BJ (cell line): ENCODE measurements at regions of chr7 and their contacts with region 1.

Region 1: DNA sequence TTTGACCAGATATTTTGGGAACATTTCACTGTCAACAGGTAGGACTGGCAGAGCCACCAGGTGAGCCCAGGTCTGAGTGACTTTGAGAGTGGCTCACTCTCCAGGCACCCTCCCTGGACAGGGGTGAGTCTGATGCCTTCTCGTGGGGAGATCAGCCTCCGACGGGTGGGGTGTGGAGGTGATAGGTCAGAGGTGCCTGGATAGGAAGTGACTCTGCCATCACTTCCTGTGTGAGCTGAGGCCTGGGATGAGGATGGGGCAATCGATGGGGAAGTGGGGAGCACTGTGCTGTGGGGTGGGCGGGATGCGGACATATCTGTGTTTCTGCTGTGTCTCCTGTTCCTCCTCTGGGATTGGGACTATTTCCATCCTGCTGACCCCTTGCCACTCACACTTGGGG is 34.6 kb downstream of the IFT22 start:
- DNase-seq: no peak
- H3K4me3 ChIP-seq: no peak overlapping the region
- H3K27me3 ChIP-seq: peaks cover 9% of the 10 kb centered on the region; the same call in 1 of the 2 replicates
- CTCF ChIP-seq: no peak

Region 2: DNA sequence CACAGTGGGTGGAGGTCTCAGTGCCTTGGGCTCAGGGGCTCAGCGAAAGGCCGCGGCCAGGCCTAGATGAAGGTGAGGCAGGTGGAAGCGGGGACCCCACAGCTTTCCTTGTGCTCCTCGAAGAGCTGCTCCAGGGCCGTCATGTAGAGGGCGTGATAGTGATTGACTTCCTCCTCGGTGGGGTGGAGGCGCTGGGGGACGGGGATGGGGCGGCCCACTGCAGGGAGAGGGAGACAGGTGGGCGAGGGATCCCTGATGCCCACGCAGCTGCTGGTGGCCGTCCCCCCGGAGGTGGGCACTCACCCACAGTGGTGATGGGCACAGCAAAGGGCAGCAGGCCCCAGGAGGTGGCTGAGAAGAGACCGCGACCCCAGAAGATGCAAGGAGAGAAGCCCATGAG is 91.1 kb before region 1 on chr7:
- CTCF ChIA-PET with region 1: interaction called, 10 read pairs
- POLR2A ChIA-PET with region 1: no interaction called
- DNase-seq: no peak
- H3K4me3 ChIP-seq: no peak overlapping the region
- H3K27me3 ChIP-seq: peaks cover 7% of the 10 kb centered on the region
- CTCF ChIP-seq: no peak

Region 3: DNA sequence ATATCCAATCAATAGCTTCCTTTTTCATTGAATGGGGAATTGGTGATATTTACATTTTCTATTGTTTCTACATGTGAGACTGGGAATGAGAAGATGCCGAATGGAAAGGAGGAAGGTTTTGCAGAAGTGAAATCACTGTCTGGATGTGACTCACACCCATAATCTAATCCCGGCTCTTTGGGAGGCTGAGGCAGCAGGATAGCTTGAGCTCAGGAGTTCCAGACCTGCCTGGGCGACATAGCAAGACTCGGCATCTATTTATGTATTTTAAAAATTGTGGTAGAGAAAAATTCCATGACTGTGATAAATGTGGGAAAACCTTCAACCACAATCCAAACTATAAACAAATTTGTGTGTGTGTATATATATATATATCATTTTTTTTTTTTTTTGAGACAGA is 31.2 kb before region 1 on chr7:
- CTCF ChIA-PET with region 1: interaction called, 11 read pairs
- POLR2A ChIA-PET with region 1: no interaction called
- DNase-seq: no peak
- H3K4me3 ChIP-seq: no peak overlapping the region
- H3K27me3 ChIP-seq: no peaks in the 10 kb centered on the region; the same call in 1 of the 2 replicates
- CTCF ChIP-seq: no peak

Region 4: DNA sequence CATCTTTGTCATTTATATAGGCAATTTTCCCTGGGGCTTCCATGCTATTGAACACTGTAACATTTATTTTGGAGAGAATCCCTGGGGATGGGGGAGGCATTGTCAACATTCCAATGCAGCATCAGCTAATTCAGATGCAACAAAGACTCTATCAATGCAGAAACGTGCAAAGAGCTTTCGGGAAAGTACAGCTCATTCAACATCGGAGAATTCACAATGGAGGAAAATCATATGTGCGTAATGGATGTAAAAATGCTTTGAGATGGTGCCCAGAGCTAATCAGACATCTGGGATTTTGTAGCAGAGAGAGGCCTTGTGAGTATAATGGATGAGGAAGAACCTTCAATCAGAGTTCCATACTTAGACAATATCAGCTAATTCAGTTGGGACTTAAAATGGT is 13.8 kb before region 1 on chr7:
- CTCF ChIA-PET with region 1: interaction called, 12 read pairs
- POLR2A ChIA-PET with region 1: no interaction called
- DNase-seq: no peak
- H3K4me3 ChIP-seq: no peak overlapping the region
- H3K27me3 ChIP-seq: peaks cover 6% of the 10 kb centered on the region; the same call in 1 of the 2 replicates
- CTCF ChIP-seq: no peak

Region 5: GRCh38 chr7:101306307-101306706 is 19.3 kb after region 1 on chr7:
- CTCF ChIA-PET with region 1: interaction called, 12 read pairs
- POLR2A ChIA-PET with region 1: no interaction called
- DNase-seq: no peak
- H3K4me3 ChIP-seq: no peak overlapping the region
- H3K27me3 ChIP-seq: peaks cover 15% of the 10 kb centered on the region
- CTCF ChIP-seq: no peak

Region 6: DNA sequence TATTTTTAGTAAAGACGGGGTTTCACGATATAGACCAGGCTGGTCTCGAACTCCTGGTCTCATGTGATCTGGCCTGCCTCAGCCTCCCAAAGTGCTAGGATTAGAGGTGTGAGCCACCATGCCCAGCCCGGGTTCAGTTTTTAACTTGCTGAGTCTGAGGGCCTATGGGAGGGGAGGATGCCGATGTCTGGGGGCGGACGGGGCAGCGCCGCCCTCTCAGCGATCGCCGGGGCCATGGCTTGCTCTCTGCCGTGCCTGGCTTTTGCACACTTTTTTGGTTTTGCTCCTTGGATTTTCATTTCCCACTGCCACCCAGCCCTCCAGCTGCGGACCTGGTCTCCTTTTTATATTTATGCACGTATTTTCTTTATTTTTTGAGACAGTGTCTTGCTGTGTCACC is 60.4 kb after region 1 on chr7:
- CTCF ChIA-PET with region 1: no interaction called
- POLR2A ChIA-PET with region 1: no interaction called
- DNase-seq: no peak
- H3K4me3 ChIP-seq: no peak overlapping the region
- H3K27me3 ChIP-seq: no peaks in the 10 kb centered on the region
- CTCF ChIP-seq: no peak